ENCODE measurements at regions of chr5 and their contacts with region 1.

Region 1: DNA sequence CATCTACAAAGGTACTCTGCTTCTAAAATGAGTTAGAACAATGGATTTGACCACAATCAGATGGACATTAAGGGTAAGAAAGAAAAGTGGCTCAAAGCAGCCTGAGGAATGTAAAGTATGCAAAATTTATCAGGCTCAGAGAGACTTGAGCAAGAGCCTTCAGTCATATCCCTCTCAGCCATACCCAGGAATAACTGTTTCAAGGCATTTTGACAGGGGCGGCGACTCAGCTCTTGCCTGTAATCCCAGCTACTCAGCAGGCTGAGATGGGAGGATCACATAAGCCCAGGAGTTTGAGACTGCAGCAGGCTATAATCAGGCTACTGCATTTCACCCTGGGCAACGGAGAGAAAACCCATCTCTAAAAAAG is 38.9 kb upstream of the ANXA2R start:
- DNase-seq: no peak
- ATAC-seq: no peak
- H3K4me3 ChIP-seq: no peak overlapping the region
- H3K27ac ChIP-seq: no peak overlapping the region
- H3K4me1 ChIP-seq: no peaks in the 10 kb centered on the region
- H3K27me3 ChIP-seq: no peaks in the 10 kb centered on the region
- CTCF ChIP-seq: no peak

Region 2: DNA sequence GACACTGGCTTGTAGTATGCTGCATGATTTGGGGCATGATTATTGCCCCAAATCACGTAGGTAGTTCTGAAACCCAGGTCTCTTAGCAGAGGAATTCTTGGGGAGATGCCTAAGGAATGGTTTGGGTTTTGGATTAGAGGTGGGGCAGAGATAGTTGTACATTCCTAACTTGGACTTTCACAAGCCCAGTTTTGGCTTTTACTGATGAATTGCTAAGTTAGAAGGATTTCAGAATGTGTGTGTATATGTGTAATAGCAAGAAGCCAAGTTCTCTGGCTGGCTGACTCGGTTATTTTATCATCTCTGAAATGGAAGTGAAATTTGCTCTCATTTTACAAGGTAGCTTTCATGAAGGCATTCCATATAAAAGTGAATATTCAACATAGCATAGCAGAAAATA is 17.9 kb after region 1 on chr5:
- CTCF ChIA-PET with region 1: no interaction called
- POLR2A ChIA-PET with region 1: interaction called, 15 read pairs
- in situ Hi-C with region 1: no loop called
- intact Hi-C with region 1: no loop called
- DNase-seq: no peak
- ATAC-seq: no peak
- H3K4me3 ChIP-seq: no peak overlapping the region
- H3K27ac ChIP-seq: no peak overlapping the region
- H3K4me1 ChIP-seq: no peaks in the 10 kb centered on the region
- H3K27me3 ChIP-seq: no peaks in the 10 kb centered on the region
- CTCF ChIP-seq: no peak